ENCODE measurements at regions of chr16 and their contacts with region 1.

Region 1: GRCh38 chr16:106623-107324 is 28.7 kb downstream of the MPG start:
- DNase-seq: peak; percentile 62 to 86 (median 77)
- H3K4me3 ChIP-seq: no peak overlapping the region
- H3K27ac ChIP-seq: no peak overlapping the region
- H3K4me1 ChIP-seq: peaks cover 0 to 12% of the 10 kb centered on the region in 2 donors
- H3K27me3 ChIP-seq: no peaks in the 10 kb centered on the region
- CTCF ChIP-seq: peak; percentile 75 to 85 (median 80)
- POLR2A ChIP-seq: no peak

Region 2: GRCh38 chr16:45454-45853 is 61.3 kb before region 1 on chr16:
- intact Hi-C with region 1: no loop called
- DNase-seq: peak in 1 of 7 donors; percentile 1
- H3K4me3 ChIP-seq: no peak overlapping the region
- H3K27ac ChIP-seq: no peak overlapping the region
- H3K4me1 ChIP-seq: no peaks in the 10 kb centered on the region
- H3K27me3 ChIP-seq: no peaks in the 10 kb centered on the region
- CTCF ChIP-seq: no peak
- POLR2A ChIP-seq: no peak

Region 3: GRCh38 chr16:180938-181667 is 74.3 kb after region 1 on chr16:
- intact Hi-C with region 1: loop called (anchors 5 kb)
- DNase-seq: peak; percentile 62 to 85 (median 78)
- H3K4me3 ChIP-seq: peak overlapping the region in 1 of 4 donors; percentile 33
- H3K27ac ChIP-seq: no peak overlapping the region
- H3K4me1 ChIP-seq: peaks cover 5 to 17% of the 10 kb centered on the region in 2 donors
- H3K27me3 ChIP-seq: peaks cover 41% of the 10 kb centered on the region
- CTCF ChIP-seq: peak; percentile 81 to 96 (median 90)
- POLR2A ChIP-seq: peak in 1 of 2 donors; percentile 7

Region 4: DNA sequence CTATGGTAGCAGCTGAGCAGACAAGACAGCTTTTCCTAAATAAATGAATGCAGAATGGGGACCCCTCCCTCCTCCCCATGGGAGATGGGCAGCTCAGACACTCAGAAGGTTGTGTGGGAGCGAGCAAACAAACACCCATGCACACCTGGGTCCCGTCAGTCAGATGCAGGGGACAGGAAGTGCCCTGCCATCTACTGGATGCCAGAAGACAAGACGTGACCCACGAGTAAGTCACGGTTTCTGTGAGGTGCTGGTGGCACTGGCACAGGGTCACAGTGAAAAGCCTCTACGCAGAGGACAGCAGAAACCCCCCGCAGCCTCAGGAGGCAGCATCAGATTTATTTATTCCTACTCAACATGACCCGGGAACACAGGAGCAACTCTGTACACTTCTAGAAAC is 81.9 kb after region 1 on chr16:
- intact Hi-C with region 1: loop called (anchors 5 kb)
- DNase-seq: no peak
- H3K4me3 ChIP-seq: no peak overlapping the region
- H3K27ac ChIP-seq: no peak overlapping the region
- H3K4me1 ChIP-seq: no peaks in the 10 kb centered on the region
- H3K27me3 ChIP-seq: no peaks in the 10 kb centered on the region
- CTCF ChIP-seq: no peak
- POLR2A ChIP-seq: no peak

Region 5: DNA sequence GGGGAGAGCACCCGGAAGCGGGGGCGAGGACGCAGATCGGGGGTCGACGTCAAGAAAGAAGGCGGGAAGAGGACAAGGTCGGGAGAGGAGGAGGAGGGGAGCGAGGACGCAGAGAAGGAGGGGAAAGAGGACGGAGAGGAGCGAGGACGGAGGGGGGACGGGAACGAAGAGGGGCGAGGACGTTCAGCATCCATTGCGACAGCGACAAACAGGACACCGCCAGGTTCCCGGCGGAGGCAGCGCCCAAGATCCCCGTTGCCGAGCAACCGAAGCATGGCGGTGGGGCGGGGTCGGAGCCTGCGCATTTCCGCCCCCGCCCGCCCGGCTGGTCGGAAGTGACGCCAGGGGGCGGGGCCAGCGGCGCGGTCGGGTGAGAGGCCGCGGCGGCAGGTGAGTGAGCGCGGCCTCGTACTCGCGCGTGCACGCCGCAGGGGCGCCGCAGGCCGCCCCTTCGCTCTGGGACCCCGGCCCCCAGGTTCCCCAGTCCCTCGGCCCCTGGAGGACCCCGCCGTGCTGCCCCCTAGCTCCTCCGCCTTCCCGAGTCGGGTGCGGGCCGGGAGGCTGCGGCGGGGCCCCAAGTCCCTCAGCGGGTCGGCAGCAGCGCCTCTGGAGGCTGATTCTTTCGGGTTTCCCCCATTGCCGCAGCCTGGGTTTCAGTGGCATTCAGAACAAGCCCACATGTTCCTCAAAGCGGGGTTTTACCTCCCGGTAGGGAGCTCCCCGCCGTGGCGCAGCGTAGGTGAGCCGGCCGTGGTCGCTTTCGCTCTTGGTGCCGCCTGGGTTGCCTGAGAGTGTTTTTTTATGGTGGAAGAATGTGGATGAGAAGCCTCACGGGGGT is 127.9 kb after region 1 on chr16 and contains the start of gene FAM234A:
- intact Hi-C with region 1: no loop called
- DNase-seq: peak; percentile 94 to 97 (median 96)
- H3K4me3 ChIP-seq: peak within 1 kb of the TSS in 3 of 4 donors; percentile 35 to 78 (median 72)
- H3K27ac ChIP-seq: peak within 1 kb of the TSS; percentile 89 to 99 (median 98)
- H3K4me1 ChIP-seq: peaks cover 4 to 9% of the 10 kb centered on the region in 2 donors
- H3K27me3 ChIP-seq: no peaks in the 10 kb centered on the region
- CTCF ChIP-seq: peak in 5 of 6 experiments; percentile 16 to 50 (median 36)
- POLR2A ChIP-seq: peak; percentile 90 to 92
- total RNA-seq, gene FAM234A: 67.5 to 207 (median 99.4) TPM

Region 6: GRCh38 chr16:252366-253337 is 145.9 kb after region 1 on chr16:
- intact Hi-C with region 1: no loop called
- DNase-seq: no peak
- H3K4me3 ChIP-seq: no peak overlapping the region
- H3K27ac ChIP-seq: peak overlapping the region in 1 of 5 donors; percentile 63
- H3K4me1 ChIP-seq: no peaks in the 10 kb centered on the region
- H3K27me3 ChIP-seq: no peaks in the 10 kb centered on the region
- CTCF ChIP-seq: no peak
- POLR2A ChIP-seq: no peak

Measured in adrenal gland (tissue), 19 donors.